Adrenal gland (tissue), 19 donors: ENCODE measurements at regions of chr13 and their contacts with region 1.

Region 1: DNA sequence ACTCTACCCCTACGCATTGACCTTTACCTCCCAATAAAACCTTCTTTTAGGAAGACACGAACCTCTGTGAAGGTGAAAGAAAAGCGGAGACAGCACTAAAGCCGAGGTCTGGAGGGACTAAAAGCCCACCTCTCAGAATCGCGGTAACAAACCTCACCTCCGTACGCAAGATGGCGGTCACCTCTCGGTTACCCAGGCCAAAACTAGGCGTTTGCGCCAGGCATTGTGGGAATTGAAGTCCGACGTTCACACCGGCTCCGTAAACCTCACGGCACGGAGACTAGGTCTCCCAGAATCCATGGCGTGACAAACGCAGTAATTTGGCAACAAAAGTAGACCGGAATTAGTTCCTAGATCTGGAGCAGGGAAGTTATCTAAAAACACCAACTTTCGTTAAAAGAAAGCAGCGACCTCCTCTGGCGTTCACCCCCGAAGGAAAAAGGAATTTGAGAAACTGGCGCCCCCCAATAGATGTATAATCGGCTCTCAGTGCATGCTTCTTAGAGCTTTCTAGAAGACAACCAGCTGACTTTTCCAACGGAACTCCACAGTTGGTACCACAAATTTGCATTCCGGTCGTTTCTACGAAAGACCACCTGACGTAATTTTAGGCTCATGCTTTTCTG is at the start of gene N4BP2L2:
- DNase-seq: peak; percentile 94 to 99 (median 97)
- H3K4me3 ChIP-seq: peak within 1 kb of the TSS; percentile 64 to 94 (median 89)
- H3K27ac ChIP-seq: peak within 1 kb of the TSS; percentile 82 to 96 (median 95)
- H3K4me1 ChIP-seq: peaks cover 19 to 37% of the 10 kb centered on the region in 2 donors
- H3K27me3 ChIP-seq: no peaks in the 10 kb centered on the region
- CTCF ChIP-seq: peak; percentile 14 to 61 (median 40)
- POLR2A ChIP-seq: peak in 1 of 2 donors; percentile 56
- total RNA-seq, gene N4BP2L2: 34.1 to 321 (median 124) TPM

Region 2: GRCh38 chr13:32228330-32229041 is 310.2 kb before region 1 on chr13:
- intact Hi-C with region 1: no loop called
- DNase-seq: no peak
- H3K4me3 ChIP-seq: no peak overlapping the region
- H3K27ac ChIP-seq: no peak overlapping the region
- H3K4me1 ChIP-seq: peaks cover 0 to 2% of the 10 kb centered on the region in 2 donors
- H3K27me3 ChIP-seq: no peaks in the 10 kb centered on the region
- CTCF ChIP-seq: no peak
- POLR2A ChIP-seq: no peak

Region 3: GRCh38 chr13:32427852-32428580 is 110.7 kb before region 1 on chr13 and contains the start of gene N4BP2L1:
- intact Hi-C with region 1: loop called in 1 of 2 experiments (anchors 10 kb)
- DNase-seq: peak; percentile 67 to 85 (median 80)
- H3K4me3 ChIP-seq: peak within 1 kb of the TSS; percentile 26 to 96 (median 77)
- H3K27ac ChIP-seq: peak within 1 kb of the TSS; percentile 58 to 93 (median 81)
- H3K4me1 ChIP-seq: peaks cover 0 to 21% of the 10 kb centered on the region in 2 donors
- H3K27me3 ChIP-seq: no peaks in the 10 kb centered on the region
- CTCF ChIP-seq: no peak
- POLR2A ChIP-seq: peak; percentile 70 to 82
- total RNA-seq, gene N4BP2L1: 6.7 to 23.5 (median 10.5) TPM

Region 4: DNA sequence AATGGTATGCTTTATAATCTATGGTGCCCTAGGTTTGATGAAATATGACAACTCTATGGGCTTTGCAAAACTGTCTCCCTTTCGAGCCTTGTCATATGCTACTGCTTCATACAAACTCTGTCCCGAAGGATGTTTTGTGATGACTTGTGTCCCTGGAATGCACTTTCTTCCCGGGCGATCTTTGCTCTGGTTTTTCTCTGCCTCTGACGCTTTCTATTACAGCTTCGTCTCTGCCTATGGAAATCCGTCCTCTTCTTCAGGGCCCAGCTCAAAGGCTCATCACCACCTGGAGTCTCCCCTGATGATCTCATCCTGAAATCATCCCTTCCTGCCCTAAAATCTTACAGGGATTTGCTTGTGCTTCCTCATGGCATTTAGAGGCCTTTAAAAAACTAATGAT is 285.9 kb after region 1 on chr13:
- intact Hi-C with region 1: no loop called
- DNase-seq: peak in 2 of 7 donors; percentile 7 to 57
- H3K4me3 ChIP-seq: no peak overlapping the region
- H3K27ac ChIP-seq: peak overlapping the region in 2 of 5 donors; percentile 13 to 34
- H3K4me1 ChIP-seq: no peaks in the 10 kb centered on the region
- H3K27me3 ChIP-seq: no peaks in the 10 kb centered on the region
- CTCF ChIP-seq: no peak
- POLR2A ChIP-seq: no peak